ENCODE measurements at regions of chr10 and their contacts with region 1.

Region 1: GRCh38 chr10:71766702-71767419 is 6.5 kb downstream of the VSIR start:
- DNase-seq: peak; percentile 85

Region 2: DNA sequence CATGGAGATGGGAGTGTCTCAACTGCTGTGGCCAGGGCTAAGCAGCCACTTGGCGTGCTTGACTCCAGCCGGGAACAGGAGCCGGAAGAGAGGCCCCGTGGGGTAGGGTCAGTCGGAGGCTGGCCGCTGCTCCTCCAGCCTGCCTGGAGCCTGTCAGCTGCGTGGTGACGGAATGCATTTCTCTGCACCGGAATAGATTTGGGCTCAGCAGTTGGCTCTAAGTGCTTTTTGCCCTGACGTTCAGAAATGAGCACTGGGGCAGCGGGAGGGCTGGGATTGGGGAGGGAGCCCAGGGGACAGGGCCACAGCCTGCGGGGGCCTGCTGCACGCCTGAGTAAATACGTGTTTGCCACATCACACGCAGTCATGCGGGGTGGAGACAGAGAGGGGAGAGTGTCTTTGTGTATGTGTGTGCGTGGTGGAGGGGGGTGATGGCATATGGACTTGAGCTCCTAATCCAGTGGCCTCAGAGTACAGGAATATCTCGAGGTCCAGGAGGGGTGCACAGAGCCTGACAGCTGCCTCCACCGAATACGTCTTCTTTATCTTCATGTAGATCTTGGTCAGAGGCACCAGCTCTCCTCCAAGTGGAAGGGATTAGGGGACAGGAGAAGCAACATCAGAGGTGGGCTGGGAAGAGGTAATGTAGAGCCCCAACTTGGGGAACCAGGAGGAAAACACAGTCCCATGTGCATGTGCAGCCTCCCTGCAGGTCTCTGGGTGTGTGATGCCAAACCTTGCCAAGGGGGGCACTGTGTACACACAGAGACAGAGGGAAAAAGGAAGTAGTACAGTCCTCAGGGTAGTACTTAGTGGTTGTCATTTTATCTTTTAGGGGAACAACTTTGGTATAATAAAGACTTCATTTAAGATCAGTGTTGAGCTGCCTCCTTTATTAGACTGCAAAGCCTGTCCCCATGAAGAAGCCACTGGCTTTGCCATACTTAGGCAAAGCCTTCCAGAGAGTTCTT is 218.7 kb before region 1 on chr10:
- intact Hi-C with region 1: loop called (anchors 5 kb)
- DNase-seq: peak; percentile 90

Region 3: DNA sequence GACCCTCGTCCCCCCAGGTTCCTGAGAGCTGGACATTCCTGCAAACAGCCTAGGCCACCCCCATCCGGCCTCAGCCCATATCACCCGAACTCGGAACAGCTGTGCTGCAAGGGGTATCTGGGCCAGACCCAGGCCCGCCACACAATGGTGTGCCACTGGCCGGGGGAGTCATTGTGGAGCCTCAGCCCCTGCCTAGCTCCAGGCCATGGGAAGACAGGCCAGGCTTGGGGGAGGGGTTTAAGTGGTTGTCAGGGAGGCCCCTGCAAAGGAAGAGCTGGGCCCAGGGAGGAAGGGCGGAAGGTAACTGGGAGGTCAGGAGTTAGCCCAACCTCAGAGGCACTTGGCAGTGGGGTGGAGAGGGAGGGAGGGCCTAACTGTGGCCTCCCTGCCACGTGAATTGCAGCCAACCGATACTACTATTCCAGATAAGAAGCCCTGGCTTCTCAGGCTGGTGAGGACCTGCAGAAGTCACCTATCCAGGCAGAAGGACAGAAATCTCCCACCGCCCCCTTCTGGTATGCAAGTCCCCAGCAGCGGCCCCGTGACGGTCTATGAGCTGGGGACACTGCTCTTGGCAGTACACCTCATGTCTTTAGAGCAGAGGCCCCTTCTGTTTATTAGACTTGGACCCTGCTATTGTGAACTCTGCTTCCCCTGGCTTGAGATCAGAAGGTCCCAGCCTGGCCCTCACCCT is 20.4 kb before region 1 on chr10:
- intact Hi-C with region 1: loop called (anchors 2 kb)
- DNase-seq: peak; percentile 86

Region 4: GRCh38 chr10:71888623-71889387 is 121.9 kb after region 1 on chr10:
- intact Hi-C with region 1: no loop called
- DNase-seq: peak; percentile 88

Region 5: DNA sequence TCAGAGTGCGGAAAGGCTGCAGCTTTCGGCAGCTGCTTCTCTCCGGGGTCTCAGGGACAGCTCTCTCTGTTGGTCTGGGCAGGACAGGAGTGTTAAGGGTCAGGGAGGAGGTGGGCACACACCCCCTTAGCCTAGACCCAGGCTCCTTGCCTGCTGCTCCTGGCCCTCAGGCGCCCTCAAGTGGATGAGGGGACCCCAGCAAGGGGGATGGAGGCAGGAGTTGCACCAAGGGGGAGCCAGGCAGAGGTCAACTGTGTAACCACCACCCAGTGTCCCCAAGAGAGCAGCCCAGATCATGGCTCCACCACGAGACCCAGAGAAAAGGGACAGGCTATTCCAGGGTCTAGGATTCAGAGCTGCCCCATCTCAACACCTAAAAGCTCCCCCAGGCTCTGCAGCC is 294.6 kb after region 1 on chr10:
- intact Hi-C with region 1: no loop called
- DNase-seq: no peak

Measured in cardiac septum (tissue), 1 donor.